Activated CD8-positive, alpha-beta memory T cell treated with anti-CD3 and anti-CD28 coated beads, Interleukin-2, amount 10 ng/mL, durations not matched to agents 7 days and 5 days (primary cell): ENCODE measurements at regions of chr12 and their contacts with region 1.

Region 1: DNA sequence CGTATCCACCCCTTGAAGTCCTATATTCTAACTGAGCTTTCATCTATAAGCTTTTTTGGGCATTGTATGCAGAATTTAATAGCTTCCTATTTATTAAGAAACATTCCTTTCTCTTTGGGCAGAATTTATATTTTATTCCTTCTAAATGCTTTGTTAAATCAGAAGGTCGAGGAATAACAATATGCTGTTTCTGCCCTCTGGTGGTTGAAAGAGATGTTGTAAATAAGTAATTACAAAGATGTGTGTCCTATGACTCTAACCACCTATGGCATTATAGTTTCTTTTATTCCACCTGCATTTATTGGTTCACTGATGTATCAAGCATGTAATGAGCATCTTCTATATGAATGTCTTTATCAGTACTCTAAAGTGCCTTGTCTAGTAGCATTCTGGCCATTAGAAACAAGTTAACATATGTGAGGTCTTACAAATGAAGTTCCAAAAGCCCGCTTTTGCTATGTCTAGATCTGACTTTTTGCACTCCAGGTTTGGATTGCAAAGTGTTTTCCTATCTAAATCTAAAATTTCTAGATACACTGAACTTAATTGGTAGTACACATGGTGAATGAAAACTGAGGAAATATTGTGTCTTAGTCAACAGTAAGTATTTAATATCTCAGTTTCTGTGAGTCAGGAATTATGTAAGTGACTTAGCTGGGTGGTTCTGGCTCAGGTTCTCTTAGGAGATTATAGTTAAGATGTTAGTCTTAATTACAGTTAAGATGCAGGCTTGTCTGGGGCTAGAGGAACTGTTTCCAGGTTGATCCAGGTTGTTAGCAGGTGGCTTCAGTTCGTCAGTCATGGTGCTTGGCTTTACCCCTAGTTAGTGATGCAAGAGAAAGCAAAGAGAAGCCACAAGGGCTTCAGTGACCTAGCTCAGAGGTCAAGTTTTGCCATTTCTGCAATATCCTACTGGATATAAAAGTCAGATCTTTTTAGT is 57.5 kb downstream of the PLEKHA5 start:
- DNase-seq: no peak
- ATAC-seq: no peak
- H3K4me3 Mint-ChIP-seq: no peak overlapping the region
- H3K27ac Mint-ChIP-seq: no peak overlapping the region
- H3K4me1 Mint-ChIP-seq: no peaks in the 10 kb centered on the region
- H3K27me3 Mint-ChIP-seq: no peaks in the 10 kb centered on the region

Region 2: DNA sequence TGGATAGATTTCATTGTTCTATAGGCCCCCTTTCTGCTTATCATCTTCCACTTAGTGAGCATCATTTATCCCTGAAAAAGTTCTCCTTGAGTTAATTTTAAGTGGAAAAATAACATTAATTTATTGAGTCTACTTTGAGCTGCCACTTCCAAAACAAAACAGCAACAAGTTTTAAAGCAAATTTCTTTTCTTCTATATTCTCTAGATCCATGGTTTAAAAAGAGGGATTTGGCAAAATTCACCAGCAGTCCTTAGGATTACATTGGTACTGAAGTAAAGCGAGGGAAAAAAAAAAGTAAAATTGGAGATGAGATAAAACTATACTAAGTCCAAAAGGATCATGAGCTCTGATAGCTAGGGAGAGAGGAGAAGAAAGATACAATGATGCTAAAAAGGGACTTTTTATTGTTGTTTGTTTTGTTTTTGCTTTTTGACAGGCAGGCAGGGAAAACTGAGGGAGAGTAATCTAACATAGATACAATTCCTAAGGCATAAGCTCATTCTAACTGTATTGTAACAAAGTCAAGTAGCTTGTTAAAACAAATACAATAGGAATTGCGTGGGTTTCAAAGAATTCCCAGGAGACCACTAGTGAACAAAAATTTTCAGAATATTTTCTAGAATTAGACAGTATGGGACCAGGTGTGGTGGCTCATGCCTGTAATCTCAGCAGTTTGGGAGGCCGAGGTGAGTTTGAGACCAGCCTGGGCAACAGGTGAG is 76.6 kb before region 1 on chr12:
- CTCF ChIA-PET with region 1: no interaction called
- DNase-seq: no peak
- ATAC-seq: no peak
- H3K4me3 Mint-ChIP-seq: no peak overlapping the region
- H3K27ac Mint-ChIP-seq: no peak overlapping the region
- H3K4me1 Mint-ChIP-seq: no peaks in the 10 kb centered on the region
- H3K27me3 Mint-ChIP-seq: peaks cover 2% of the 10 kb centered on the region

Region 3: GRCh38 chr12:19200261-19200660 is 13.3 kb after region 1 on chr12:
- CTCF ChIA-PET with region 1: interaction called, 10 read pairs
- DNase-seq: no peak
- ATAC-seq: no peak
- H3K4me3 Mint-ChIP-seq: no peak overlapping the region
- H3K27ac Mint-ChIP-seq: no peak overlapping the region
- H3K4me1 Mint-ChIP-seq: peaks cover 4% of the 10 kb centered on the region
- H3K27me3 Mint-ChIP-seq: no peaks in the 10 kb centered on the region

Region 4: GRCh38 chr12:19248929-19249602 is 62.1 kb after region 1 on chr12:
- CTCF ChIA-PET with region 1: no interaction called
- DNase-seq: no peak
- ATAC-seq: no peak
- H3K4me3 Mint-ChIP-seq: no peak overlapping the region
- H3K27ac Mint-ChIP-seq: no peak overlapping the region
- H3K4me1 Mint-ChIP-seq: no peaks in the 10 kb centered on the region
- H3K27me3 Mint-ChIP-seq: no peaks in the 10 kb centered on the region